ENCODE measurements at regions of chr4 and their contacts with region 1.

Region 1: GRCh38 chr4:41887821-41888686 is 47.2 kb upstream of the TMEM33 start:
- DNase-seq: no peak
- ATAC-seq: no peak

Region 2: GRCh38 chr4:41257257-41257901 is 630.7 kb before region 1 on chr4:
- intact Hi-C with region 1: loop called (anchors 5 kb)
- DNase-seq: peak; percentile 64
- ATAC-seq: peak; percentile 87

Region 3: DNA sequence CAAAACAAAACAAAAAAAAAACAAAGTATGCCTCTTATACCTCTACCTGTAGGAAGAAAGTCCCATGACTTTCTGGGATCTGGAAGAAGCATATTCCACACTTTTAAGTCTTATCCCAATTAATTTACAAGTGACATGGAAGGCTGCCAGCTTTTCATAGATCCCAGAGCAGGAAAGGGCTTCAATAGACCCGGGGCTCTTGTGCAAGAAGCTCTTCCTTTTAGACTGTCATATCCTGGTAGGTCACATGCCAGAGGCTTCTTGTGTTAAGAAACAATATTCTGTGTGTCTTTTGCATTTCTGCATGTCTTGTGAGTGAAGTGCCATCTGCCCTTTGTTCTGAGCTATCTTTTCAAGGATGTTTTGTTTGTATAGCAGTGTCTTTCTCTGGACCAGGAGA is 55.1 kb before region 1 on chr4:
- intact Hi-C with region 1: no loop called
- DNase-seq: no peak
- ATAC-seq: no peak